HepG2 (cell line): ENCODE measurements at regions of chr5 and their contacts with region 1.

Region 1: DNA sequence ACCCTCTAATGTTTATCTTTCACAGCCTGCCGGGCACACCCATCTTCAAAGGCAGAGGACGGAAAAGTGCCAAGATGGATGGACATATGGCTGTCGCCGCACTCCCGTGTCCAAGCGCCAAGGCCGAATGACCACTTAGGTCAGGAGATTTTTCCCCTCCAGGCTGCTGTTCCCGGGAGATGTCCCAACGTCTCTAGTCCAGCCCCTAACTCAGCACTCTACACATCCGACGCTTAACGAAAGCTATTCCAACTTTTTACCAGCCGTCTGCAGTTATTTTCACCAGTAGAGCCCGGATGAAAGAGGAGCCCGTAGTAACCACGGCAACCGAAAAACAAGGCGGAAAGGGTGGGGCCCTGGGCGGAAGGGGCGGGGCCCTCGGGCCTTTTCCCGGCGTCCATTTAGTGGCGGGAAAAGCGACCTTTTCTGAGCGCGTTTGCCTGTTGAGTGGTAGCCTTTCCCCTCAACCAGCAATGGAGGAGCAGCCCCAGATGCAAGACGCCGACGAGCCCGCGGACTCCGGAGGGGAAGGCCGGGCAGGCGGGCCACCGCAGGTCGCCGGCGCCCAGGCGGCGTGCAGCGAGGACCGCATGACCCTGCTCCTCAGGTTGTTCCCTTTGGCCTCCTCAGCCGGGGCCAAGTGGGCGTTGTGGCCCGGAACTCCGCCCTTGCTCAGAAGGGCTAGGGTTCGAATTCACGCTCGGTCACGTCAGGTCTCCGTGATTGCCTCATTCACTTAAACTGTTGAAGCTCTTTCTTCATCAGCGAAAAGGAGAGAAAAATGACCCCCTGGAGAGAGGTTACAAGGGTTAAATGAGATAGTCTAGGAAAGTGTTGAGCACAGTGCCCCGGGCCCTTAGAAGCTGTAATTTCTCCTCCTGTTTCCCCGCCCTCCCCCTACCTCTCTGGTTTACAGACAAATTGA is at the start of gene CENPH:
- DNase-seq: peak; percentile 88
- ATAC-seq: peak; percentile 94
- H3K4me3 ChIP-seq: peak within 1 kb of the TSS; percentile 71 to 91 (median 76)
- H3K27ac ChIP-seq: peak within 1 kb of the TSS; percentile 88
- H3K4me1 ChIP-seq: peaks cover 12% of the 10 kb centered on the region
- H3K27me3 ChIP-seq: no peaks in the 10 kb centered on the region; a peak in 1 of 5 replicates
- CTCF ChIP-seq: no peak
- EP300 ChIP-seq: no peak
- POLR2A ChIP-seq: peak; percentile 59 to 74
- RAD21 ChIP-seq: no peak
- total RNA-seq, gene CENPH: 28.8 and 36.2 TPM in 2 replicates

Region 2: DNA sequence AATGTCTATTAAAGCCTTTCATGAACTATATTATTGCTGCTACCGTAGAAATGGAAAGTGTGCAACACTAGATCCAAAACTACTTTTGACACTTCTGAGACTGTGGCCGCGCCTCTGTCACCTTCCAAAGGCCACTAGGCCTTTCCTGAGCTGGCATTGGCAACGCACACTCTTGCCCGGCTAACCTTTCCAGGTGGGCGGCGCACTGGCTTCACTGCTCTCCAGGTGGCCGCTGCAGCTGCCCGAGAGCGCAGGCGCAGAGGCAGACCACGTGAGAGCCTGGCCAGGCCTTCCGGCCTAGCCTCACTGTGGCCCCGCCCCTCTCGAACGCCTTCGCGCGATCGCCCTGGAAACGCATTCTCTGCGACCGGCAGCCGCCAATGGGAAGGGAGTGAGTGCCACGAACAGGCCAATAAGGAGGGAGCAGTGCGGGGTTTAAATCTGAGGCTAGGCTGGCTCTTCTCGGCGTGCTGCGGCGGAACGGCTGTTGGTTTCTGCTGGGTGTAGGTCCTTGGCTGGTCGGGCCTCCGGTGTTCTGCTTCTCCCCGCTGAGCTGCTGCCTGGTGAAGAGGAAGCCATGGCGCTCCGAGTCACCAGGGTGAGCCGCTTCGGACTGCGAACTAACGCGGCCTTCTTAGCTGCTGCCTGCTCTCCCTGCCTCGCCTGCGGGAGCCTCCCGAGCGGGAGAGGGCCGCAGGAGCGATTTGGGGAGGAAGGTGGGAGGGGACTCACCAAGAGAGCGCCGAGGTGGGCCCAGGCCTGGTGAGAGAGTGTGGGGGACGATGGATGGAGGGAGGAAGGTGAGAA is 22.5 kb before region 1 on chr5 and contains the start of gene CCNB1:
- CTCF ChIA-PET with region 1: no interaction called
- POLR2A ChIA-PET with region 1: interaction called, 5 read pairs
- in situ Hi-C with region 1: no loop called
- intact Hi-C with region 1: loop called (anchors 2 kb)
- DNase-seq: peak; percentile 97
- ATAC-seq: peak; percentile 99
- H3K4me3 ChIP-seq: peak within 1 kb of the TSS; percentile 94 to 95 (median 95)
- H3K27ac ChIP-seq: peak within 1 kb of the TSS; percentile 89
- H3K4me1 ChIP-seq: peaks cover 50% of the 10 kb centered on the region
- H3K27me3 ChIP-seq: no peaks in the 10 kb centered on the region
- CTCF ChIP-seq: peak; percentile 68
- EP300 ChIP-seq: no peak
- POLR2A ChIP-seq: peak; percentile 89
- RAD21 ChIP-seq: peak; percentile 34; the same call in 1 of the 2 replicates
- total RNA-seq, gene CCNB1: 316 and 431 TPM in 2 replicates

Region 3: DNA sequence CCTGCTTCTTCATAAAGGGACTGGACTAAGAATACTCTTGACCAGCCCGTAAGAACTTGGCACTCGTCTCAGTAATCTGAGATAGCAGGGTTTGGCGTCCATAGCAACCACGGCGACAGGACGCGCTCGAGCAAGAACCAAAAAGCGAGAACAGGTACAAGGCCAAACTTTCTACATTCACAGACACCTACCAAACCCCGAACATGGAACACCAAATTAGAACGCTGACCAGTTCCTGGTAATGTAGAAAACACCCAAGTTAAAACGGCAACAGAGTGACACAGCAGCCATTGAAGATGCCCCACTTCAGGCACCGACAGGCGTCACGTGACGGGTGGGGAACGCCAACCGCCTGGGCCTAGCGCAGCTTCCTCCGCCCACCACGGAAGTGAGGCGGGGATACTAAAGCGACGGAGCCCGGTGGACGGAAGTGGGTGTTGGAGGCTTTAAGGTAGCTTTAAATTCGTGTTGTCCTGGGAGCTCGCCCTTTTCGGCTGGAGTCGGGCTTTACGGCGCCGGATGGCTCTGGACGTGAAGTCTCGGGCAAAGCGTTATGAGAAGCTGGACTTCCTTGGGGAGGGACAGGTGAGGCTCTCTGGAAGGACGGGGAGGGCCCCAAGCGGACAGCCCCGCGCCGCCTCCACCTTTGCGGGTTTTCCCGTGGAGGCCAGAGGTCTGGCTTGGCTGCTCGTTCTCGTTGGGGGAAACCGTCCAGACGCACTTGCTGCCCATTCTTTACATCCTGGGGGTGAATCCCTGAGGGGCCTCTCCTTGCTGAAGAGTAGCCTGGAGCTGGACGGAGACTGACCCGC is 45.2 kb after region 1 on chr5 and contains the start of gene CDK7:
- CTCF ChIA-PET with region 1: no interaction called
- POLR2A ChIA-PET with region 1: interaction called, 5 read pairs
- in situ Hi-C with region 1: no loop called
- intact Hi-C with region 1: loop called (anchors 1 kb)
- DNase-seq: peak; percentile 86
- ATAC-seq: peak; percentile 99
- H3K4me3 ChIP-seq: peak within 1 kb of the TSS; percentile 84 to 98 (median 98)
- H3K27ac ChIP-seq: peak within 1 kb of the TSS; percentile 84
- H3K4me1 ChIP-seq: peaks cover 36% of the 10 kb centered on the region
- H3K27me3 ChIP-seq: no peaks in the 10 kb centered on the region; a peak in 1 of 5 replicates
- CTCF ChIP-seq: 0 out of 2 replicates have a peak, but pooled peaks have one; percentile 24
- EP300 ChIP-seq: peak in 1 of 2 experiments; percentile 27; a peak in 1 of 4 replicates
- POLR2A ChIP-seq: peak; percentile 84 to 91
- RAD21 ChIP-seq: peak; percentile 31
- total RNA-seq, gene CDK7: 54.9 and 78.8 TPM in 2 replicates